ENCODE measurements at regions of chr6 and their contacts with region 1.

Region 1: GRCh38 chr6:150891888-150892485 is 26.5 kb downstream of the MTHFD1L start:
- DNase-seq: peak; percentile 64
- H3K4me3 ChIP-seq: no peak overlapping the region
- H3K27ac ChIP-seq: no peak overlapping the region
- H3K4me1 ChIP-seq: peaks cover 16% of the 10 kb centered on the region
- H3K27me3 ChIP-seq: no peaks in the 10 kb centered on the region
- CTCF ChIP-seq: peak; percentile 88

Region 2: GRCh38 chr6:150928882-150929281 is 36.9 kb after region 1 on chr6:
- intact Hi-C with region 1: no loop called
- DNase-seq: no peak
- H3K4me3 ChIP-seq: no peak overlapping the region
- H3K27ac ChIP-seq: no peak overlapping the region
- H3K4me1 ChIP-seq: peaks cover 16% of the 10 kb centered on the region
- H3K27me3 ChIP-seq: no peaks in the 10 kb centered on the region
- CTCF ChIP-seq: peak; percentile 37

Region 3: GRCh38 chr6:150981095-150981494 is 89.1 kb after region 1 on chr6:
- intact Hi-C with region 1: no loop called
- DNase-seq: no peak
- H3K4me3 ChIP-seq: no peak overlapping the region
- H3K27ac ChIP-seq: no peak overlapping the region
- H3K4me1 ChIP-seq: peaks cover 11% of the 10 kb centered on the region
- H3K27me3 ChIP-seq: no peaks in the 10 kb centered on the region
- CTCF ChIP-seq: no peak

Region 4: DNA sequence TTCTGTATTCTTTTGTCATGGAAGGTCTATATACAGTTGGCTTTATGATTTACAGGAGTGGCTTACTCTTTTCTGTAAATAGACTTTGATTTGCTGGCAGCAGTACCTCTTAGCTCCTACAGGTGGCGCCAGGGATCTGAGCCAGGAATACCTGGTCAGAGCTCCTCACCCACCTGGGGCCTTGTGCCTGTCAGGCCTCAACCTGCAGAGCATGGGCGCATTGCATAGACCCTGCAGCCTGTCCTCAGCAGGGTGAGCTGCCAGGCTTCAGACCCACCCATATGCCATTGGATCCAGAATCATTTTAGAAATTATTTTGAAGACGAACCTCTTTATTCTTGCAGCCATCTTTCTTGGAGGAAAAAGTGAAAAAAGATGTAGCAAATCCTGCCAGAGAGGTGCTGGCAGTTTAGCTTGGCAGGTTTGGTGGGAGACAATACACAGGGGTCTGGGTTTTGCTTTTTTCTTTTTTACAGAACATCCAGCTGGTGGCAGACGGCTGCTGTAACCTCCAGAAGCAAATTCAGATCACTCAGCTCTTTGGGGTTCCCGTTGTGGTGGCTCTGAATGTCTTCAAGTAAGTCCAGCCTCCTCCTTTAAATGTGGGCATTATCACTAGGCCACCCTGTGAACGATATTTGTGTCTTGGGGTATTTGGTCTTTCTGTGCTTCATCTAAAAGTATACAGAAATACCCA is 122.6 kb after region 1 on chr6:
- intact Hi-C with region 1: loop called (anchors 5 kb)
- DNase-seq: peak; percentile 62
- H3K4me3 ChIP-seq: peak overlapping the region; percentile 24
- H3K27ac ChIP-seq: peak overlapping the region; percentile 2
- H3K4me1 ChIP-seq: peaks cover 7% of the 10 kb centered on the region
- H3K27me3 ChIP-seq: no peaks in the 10 kb centered on the region
- CTCF ChIP-seq: peak; percentile 100

Region 5: DNA sequence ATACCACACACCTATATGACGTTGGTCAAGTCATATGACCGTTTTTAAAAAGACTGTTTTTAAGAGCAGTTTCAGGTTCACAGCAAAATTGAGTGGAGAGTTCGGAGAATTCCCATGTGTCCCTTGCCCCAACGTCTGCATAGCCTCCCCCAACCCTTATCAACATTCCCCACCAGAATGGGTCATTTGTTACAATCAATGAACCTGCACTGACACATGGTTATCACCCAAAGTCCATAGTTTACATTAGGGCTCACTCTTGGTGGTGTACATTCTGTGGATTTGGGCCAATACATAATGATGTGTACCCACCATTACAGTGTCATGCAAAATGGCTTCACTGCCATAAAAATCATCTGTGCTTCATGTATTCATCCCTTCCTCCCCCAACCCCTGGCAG is 447.4 kb after region 1 on chr6:
- intact Hi-C with region 1: loop called (anchors 5 kb)
- DNase-seq: no peak
- H3K4me3 ChIP-seq: no peak overlapping the region
- H3K27ac ChIP-seq: no peak overlapping the region
- H3K4me1 ChIP-seq: no peaks in the 10 kb centered on the region
- H3K27me3 ChIP-seq: no peaks in the 10 kb centered on the region
- CTCF ChIP-seq: no peak